ENCODE measurements at regions of chr16 and their contacts with region 1.

Region 1: GRCh38 chr16:53945996-53946395 is 242.0 kb downstream of the FTO start:
- DNase-seq: no peak
- H3K4me3 ChIP-seq: no peak overlapping the region
- H3K27ac ChIP-seq: no peak overlapping the region
- H3K4me1 ChIP-seq: no peaks in the 10 kb centered on the region
- H3K27me3 ChIP-seq: no peaks in the 10 kb centered on the region
- CTCF ChIP-seq: peak; percentile 79 to 80 (median 79)

Region 2: DNA sequence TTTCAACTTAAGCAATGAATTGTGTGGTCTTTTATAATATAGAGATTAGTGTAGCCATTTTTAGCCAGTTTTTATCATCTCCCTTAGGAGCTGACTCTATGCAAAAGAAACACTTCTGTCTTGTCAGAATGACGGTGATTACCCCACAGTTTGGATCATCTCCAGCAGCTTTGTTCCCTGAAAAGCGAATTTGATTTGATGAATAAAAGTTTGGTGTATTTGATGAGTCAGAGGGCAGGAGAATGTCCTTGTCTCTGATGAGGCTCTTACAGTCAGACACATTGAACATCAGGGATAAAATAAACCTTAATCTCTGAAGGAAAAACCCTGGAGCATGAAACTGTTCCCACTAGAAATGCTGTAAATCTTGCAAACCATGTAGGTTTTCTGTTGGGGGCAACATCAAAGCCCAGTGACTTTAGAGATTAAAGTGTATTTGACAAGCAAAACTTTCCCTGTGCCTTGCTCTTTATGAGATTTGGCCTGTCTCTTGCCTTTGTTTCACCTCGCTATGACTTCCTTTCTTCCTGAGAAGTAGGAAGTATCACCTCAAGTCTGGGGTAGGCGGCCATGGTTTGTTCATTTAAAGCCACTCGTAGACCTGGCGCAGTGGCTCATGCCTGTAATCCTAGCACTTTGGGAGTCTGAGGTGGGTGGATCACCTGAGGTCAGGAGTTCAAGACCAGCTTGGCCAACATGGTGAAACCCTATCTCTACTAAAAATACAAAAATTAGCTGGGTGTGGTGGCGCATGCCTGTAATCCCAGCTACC is 32.7 kb before region 1 on chr16:
- dilution Hi-C with region 1: loop called (anchors 5 kb)
- DNase-seq: no peak
- H3K4me3 ChIP-seq: no peak overlapping the region
- H3K27ac ChIP-seq: peak overlapping the region; percentile 78
- H3K4me1 ChIP-seq: peaks cover 17% of the 10 kb centered on the region
- H3K27me3 ChIP-seq: no peaks in the 10 kb centered on the region
- CTCF ChIP-seq: no peak

Region 3: GRCh38 chr16:54015147-54015546 is 69.2 kb after region 1 on chr16:
- dilution Hi-C with region 1: no loop called
- DNase-seq: no peak
- H3K4me3 ChIP-seq: no peak overlapping the region
- H3K27ac ChIP-seq: no peak overlapping the region
- H3K4me1 ChIP-seq: no peaks in the 10 kb centered on the region
- H3K27me3 ChIP-seq: no peaks in the 10 kb centered on the region
- CTCF ChIP-seq: no peak